ENCODE measurements at regions of chr14 and their contacts with region 1.

Region 1: DNA sequence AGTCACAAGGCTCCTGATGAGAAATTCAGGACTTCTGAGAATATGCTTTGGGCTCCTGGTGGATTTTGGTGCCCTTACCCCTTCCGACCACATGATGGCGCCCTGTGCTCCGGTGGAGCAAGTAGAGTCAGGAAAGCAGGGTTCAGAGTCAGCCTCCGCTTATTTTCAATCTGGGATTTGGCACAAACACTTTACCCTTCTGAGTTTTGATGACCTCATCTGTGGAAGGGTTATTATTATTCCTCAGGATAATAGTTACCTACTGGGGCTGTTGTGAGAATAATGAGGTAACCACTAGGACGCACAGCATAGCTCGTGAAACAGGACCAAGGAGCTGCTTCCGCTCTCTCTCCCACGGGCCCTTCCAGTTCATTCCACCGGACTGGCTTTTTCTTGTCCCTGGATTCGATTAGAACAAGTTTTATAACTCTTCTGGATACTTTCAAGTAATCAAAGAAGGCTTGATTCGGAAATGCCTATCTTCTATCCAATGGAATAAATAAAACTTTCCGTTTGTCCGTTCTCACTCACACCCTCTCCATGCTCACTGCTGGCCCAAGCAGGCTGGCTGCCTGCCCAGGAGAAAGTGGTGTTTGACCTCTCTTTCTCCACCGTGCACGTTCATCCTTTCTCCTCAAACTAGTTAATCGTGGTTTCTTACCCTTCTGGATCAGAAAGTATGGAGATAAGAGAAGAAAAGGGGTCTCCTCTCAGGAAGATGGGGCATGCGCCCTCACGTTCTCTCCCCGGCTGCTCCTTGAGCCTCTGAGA is 104.6 kb downstream of the GALC start:
- DNase-seq: no peak
- H3K4me3 ChIP-seq: no peak overlapping the region
- H3K27ac ChIP-seq: no peak overlapping the region
- H3K4me1 ChIP-seq: no peaks in the 10 kb centered on the region
- H3K27me3 ChIP-seq: no peaks in the 10 kb centered on the region
- CTCF ChIP-seq: no peak
- POLR2A ChIP-seq: no peak

Region 2: DNA sequence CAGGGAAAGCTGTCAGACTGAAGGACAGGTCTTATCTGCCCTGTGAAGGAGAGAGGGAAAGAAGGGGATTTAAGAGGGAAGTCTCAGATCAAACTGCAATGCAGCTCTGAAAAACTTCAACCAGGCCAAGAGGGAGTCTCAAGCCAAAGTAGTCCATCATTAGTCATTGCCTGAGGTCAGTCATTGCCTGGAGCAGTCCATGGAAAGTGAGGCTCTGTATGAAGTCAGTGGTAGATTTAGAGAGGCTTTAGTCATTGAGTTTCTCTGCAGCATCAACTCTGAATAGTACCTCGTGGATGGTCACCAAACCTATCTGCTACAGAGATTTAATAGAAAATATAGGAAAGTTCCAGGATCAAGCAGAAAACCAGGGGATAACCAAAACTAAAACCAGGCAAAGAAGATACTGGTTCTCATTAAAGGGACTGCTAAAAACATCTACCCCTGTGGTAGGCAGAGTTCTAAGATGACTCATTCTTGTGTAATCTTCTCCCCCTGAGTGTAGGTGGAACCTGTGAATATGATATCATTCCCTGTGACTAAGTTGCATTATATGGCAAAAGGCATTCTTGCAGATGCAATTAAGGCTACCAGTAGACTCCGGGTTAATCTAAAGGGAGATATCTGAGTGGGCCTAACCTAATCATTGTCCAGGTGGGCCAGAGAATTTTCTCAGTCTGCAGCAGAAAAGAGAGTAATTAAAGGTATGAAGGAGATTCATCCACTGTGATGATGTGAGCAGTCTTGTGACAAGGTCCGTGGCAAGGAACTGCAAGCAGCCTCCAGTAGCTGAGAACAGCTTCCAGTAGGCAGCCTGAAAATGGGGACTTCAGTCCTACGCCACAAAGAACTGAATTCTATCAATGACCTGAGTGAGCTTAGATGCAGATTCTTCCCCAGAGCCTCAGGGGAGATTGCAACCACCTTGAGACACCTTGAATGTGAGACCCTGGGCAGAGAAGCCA is 18.5 kb before region 1 on chr14:
- intact Hi-C with region 1: no loop called
- DNase-seq: no peak
- H3K4me3 ChIP-seq: no peak overlapping the region
- H3K27ac ChIP-seq: peak overlapping the region; percentile 18 to 75
- H3K4me1 ChIP-seq: no peaks in the 10 kb centered on the region
- H3K27me3 ChIP-seq: no peaks in the 10 kb centered on the region
- CTCF ChIP-seq: no peak
- POLR2A ChIP-seq: no peak

Region 3: DNA sequence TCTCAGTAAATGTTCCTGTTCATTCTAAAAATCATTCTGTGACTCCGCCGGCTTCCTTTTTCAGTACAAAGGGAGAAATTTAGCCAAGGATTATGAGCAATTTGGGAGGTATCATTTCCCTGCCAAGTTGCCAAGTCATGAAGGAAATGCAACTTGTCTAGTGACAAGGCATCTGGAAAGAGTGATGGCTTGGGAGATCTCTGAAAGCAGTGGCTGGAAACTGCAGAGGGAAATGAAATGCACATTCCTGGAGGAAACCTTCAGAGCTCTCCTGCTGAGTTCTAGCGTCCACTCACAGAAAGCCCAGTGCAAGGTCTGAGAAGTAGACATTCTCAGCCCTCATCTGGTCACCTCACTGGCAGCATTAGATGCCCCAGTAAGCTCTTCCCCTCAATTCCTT is 12.8 kb after region 1 on chr14:
- intact Hi-C with region 1: loop called (anchors 1 kb)
- DNase-seq: no peak
- H3K4me3 ChIP-seq: no peak overlapping the region
- H3K27ac ChIP-seq: no peak overlapping the region
- H3K4me1 ChIP-seq: no peaks in the 10 kb centered on the region
- H3K27me3 ChIP-seq: no peaks in the 10 kb centered on the region
- CTCF ChIP-seq: no peak
- POLR2A ChIP-seq: no peak

Measured in breast epithelium (tissue), 4 donors.